CD4-positive, alpha-beta T cell (primary cell): ENCODE measurements at regions of chr6 and their contacts with region 1.

Region 1: DNA sequence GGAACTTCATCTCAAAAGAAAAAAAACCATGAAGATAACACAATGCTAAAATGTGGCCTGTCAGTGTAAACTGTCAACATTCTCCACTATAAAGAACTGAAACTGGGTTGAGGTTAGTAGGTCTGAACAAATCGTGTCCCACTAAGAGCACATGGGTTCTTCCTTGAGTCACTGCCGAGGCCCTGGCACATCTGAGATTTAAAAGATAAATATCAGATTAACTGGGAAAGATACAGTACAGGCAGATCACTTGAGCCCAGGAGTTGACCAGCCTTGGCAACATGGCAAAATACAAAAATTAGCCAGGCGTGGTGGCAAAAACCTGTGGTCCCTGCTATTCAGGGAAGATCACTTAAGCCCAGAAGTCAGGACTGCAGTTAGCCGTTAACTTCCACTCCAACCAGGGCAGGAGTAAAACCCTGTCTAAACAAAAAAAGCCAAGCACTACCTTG is 5.6 kb downstream of the EEF1A1 start:
- DNase-seq: peak in 3 of 14 experiments; percentile 28 to 48 (median 47)
- ATAC-seq: no peak
- H3K4me3 ChIP-seq: no peak overlapping the region
- H3K4me3 Mint-ChIP-seq: peak overlapping the region; percentile 81
- H3K27ac ChIP-seq: peak overlapping the region in 1 of 2 donors; percentile 16
- H3K27ac Mint-ChIP-seq: peak overlapping the region; percentile 87
- H3K4me1 ChIP-seq: peaks cover 47% of the 10 kb centered on the region
- H3K4me1 Mint-ChIP-seq: peaks cover 59% of the 10 kb centered on the region
- H3K27me3 ChIP-seq: no peaks in the 10 kb centered on the region
- H3K27me3 Mint-ChIP-seq: no peaks in the 10 kb centered on the region
- CTCF ChIP-seq: no peak

Region 2: DNA sequence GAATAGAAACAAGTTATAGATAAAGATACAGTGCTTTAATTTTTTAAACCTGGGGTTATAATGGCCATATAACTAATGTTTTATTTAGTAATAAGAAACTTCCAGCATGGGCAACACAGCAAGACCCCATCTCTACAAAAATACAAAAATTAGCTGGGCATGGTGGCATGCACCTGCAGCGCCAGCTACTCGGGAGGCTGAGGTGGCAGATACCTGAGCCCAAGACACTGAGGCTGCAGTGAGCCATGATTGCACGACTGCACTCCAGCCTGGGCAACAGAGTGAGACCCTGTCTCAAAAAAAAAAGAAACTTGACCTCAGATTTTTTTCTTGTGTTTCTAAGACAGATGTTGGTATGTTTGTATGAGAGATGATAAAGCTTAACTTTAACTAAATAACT is 17.3 kb before region 1 on chr6:
- CTCF ChIA-PET with region 1: interaction called, 11 read pairs
- POLR2A ChIA-PET with region 1: interaction called, 4 read pairs
- intact Hi-C with region 1: no loop called
- DNase-seq: no peak
- ATAC-seq: no peak
- H3K4me3 ChIP-seq: no peak overlapping the region
- H3K4me3 Mint-ChIP-seq: no peak overlapping the region
- H3K27ac ChIP-seq: no peak overlapping the region
- H3K27ac Mint-ChIP-seq: no peak overlapping the region
- H3K4me1 ChIP-seq: no peaks in the 10 kb centered on the region
- H3K4me1 Mint-ChIP-seq: no peaks in the 10 kb centered on the region
- H3K27me3 ChIP-seq: no peaks in the 10 kb centered on the region
- H3K27me3 Mint-ChIP-seq: no peaks in the 10 kb centered on the region
- CTCF ChIP-seq: no peak

Region 3: GRCh38 chr6:73564578-73565345 is 49.5 kb after region 1 on chr6:
- CTCF ChIA-PET with region 1: no interaction called
- POLR2A ChIA-PET with region 1: no interaction called
- intact Hi-C with region 1: no loop called
- DNase-seq: no peak
- ATAC-seq: no peak
- H3K4me3 ChIP-seq: no peak overlapping the region
- H3K4me3 Mint-ChIP-seq: no peak overlapping the region
- H3K27ac ChIP-seq: no peak overlapping the region
- H3K27ac Mint-ChIP-seq: no peak overlapping the region
- H3K4me1 ChIP-seq: no peaks in the 10 kb centered on the region
- H3K4me1 Mint-ChIP-seq: no peaks in the 10 kb centered on the region
- H3K27me3 ChIP-seq: no peaks in the 10 kb centered on the region
- H3K27me3 Mint-ChIP-seq: no peaks in the 10 kb centered on the region
- CTCF ChIP-seq: no peak

Region 4: GRCh38 chr6:73585566-73586415 is 70.6 kb after region 1 on chr6:
- CTCF ChIA-PET with region 1: interaction called, 10 read pairs
- POLR2A ChIA-PET with region 1: interaction called, 137 read pairs
- intact Hi-C with region 1: loop called in 1 of 2 experiments (anchors 2 kb)
- DNase-seq: peak in 8 of 14 experiments; percentile 6 to 87 (median 36)
- ATAC-seq: peak; percentile 86
- H3K4me3 ChIP-seq: peak overlapping the region; percentile 48
- H3K4me3 Mint-ChIP-seq: peak overlapping the region; percentile 75
- H3K27ac ChIP-seq: peak overlapping the region; percentile 89 to 93
- H3K27ac Mint-ChIP-seq: peak overlapping the region; percentile 98
- H3K4me1 ChIP-seq: peaks cover 15% of the 10 kb centered on the region
- H3K4me1 Mint-ChIP-seq: peaks cover 20% of the 10 kb centered on the region
- H3K27me3 ChIP-seq: no peaks in the 10 kb centered on the region
- H3K27me3 Mint-ChIP-seq: no peaks in the 10 kb centered on the region
- CTCF ChIP-seq: no peak

Region 5: DNA sequence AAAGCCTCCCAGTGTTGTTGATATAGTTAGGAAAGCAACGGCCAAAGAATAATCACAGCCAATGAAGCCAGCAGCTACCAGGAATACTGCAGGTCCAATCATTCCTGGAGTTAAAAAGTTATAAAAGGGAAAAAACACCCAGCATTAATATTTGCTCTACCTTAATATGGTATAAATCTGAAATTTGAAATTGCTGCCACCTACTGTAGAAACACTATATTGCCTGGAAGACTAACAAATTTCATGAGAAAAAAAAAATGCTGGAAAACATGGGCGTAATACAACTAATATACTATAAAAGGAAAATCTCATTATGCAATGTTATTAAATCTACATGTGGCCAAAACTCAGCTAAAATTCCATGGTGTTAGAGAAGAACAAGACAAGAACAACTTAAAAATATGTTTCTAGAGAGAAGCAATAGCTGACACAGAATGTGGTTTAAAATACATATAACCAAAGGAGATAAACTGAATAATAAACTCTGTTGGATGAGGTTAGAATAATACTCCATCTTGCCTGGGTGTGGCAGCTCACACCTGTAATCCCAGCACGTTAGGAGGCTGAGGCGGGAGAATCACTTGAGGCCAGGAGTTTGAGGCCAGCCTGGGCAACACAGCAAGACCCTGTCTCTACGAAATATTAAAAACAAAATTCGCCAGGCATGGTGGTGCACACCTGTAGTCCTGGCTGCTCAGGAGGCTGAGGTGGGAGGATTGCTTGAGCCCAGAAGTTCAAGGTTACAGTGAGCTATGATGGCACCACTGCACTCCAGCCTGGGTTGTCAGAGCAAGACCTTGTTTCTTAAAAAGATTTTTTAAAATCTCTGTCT is 95.4 kb after region 1 on chr6:
- CTCF ChIA-PET with region 1: interaction called, 50 read pairs
- POLR2A ChIA-PET with region 1: interaction called, 89 read pairs
- intact Hi-C with region 1: loop called (anchors 1 kb)
- DNase-seq: peak in 3 of 14 experiments; percentile 71 to 74 (median 71)
- ATAC-seq: peak; percentile 78
- H3K4me3 ChIP-seq: no peak overlapping the region
- H3K4me3 Mint-ChIP-seq: no peak overlapping the region
- H3K27ac ChIP-seq: no peak overlapping the region
- H3K27ac Mint-ChIP-seq: no peak overlapping the region
- H3K4me1 ChIP-seq: no peaks in the 10 kb centered on the region
- H3K4me1 Mint-ChIP-seq: peaks cover 5% of the 10 kb centered on the region
- H3K27me3 ChIP-seq: no peaks in the 10 kb centered on the region
- H3K27me3 Mint-ChIP-seq: no peaks in the 10 kb centered on the region
- CTCF ChIP-seq: peak; percentile 74